GM10248 (cell line): ENCODE measurements at regions of chr5 and their contacts with region 1.

Region 1: GRCh38 chr5:126339215-126339805 is 83.9 kb upstream of the GRAMD2B start:
- DNase-seq: peak; percentile 43
- CTCF ChIP-seq: peak; percentile 84

Region 2: GRCh38 chr5:126363658-126364057 is 24.3 kb after region 1 on chr5:
- CTCF ChIA-PET with region 1: no interaction called
- POLR2A ChIA-PET with region 1: no interaction called
- DNase-seq: no peak
- CTCF ChIP-seq: no peak

Region 3: GRCh38 chr5:126389179-126389578 is 49.9 kb after region 1 on chr5:
- CTCF ChIA-PET with region 1: no interaction called
- POLR2A ChIA-PET with region 1: no interaction called
- DNase-seq: no peak
- CTCF ChIP-seq: no peak

Region 4: DNA sequence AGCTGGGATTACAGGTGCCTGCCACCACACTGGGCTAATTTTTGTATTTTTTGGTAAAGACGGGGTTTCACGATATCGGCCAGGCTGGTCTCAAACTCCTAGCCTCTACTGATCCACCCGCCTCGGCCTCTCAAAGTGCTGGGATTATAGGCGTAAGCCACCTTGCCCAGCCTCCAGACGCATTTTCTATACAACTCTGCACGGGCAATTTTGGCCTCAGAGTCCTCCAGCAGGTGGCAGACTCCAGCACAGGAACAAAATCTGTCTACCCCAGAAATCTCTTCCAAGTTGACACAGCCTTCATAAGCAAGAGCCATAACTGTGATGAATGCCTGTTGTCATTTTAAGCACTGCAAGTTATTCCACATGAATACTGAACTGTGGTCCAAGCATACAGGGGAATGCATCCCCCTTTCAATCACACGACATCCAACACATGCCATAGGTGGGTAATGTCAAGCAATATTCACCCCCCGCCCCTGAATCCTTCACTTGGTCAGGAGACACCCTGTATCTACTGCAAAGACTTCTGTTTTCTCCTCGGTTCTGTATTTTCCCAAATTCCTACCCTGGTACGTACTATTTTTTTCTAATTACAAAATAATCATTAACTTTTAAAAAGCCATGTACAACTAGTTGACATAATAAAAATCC is 204.9 kb after region 1 on chr5:
- CTCF ChIA-PET with region 1: interaction called, 220 read pairs
- POLR2A ChIA-PET with region 1: no interaction called
- DNase-seq: peak; percentile 56
- CTCF ChIP-seq: peak; percentile 68

Region 5: DNA sequence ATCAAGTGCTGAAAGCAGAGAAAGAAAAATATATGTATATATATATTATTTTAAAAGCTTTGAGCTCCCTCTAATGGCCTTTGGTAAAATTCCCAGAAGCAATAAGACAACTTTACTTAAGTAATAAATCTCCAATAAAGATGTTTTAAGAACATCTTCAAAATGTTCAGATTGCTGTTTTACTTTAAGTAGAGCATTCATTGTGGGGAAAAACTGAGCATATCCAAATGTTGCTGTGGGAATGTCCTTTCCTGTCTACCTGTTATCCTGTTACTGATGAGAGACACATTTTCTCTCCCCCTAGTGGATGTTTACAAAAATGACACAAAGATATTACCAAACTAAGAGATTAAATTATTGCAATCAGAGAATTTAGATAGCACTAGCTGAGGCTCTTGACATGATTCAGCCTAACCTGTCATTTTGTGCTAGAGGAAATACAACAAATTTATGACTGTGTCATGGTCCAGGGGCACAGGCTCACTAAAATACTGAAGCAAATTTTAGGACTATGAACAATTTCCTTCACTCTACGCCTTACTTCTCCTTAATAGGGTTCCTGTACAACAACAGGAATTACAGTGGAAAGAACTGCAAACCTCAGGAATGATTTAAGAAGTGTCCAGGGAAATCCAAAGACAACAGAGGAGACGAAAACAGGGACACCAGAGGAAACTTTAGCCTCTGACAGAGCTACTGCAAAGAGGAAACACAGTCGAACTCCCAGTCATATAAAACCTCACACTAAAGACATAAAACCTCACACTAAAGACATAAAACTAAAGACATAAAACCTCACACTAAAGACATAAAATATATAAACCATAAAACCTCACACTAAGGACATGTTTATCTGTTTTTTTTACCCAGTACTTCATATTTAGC is 1153.8 kb after region 1 on chr5:
- CTCF ChIA-PET with region 1: interaction called, 10 read pairs
- POLR2A ChIA-PET with region 1: no interaction called
- DNase-seq: peak; percentile 25
- CTCF ChIP-seq: peak; percentile 56